PC-9 (cell line): ENCODE measurements at regions of chr18 and their contacts with region 1.

Region 1: DNA sequence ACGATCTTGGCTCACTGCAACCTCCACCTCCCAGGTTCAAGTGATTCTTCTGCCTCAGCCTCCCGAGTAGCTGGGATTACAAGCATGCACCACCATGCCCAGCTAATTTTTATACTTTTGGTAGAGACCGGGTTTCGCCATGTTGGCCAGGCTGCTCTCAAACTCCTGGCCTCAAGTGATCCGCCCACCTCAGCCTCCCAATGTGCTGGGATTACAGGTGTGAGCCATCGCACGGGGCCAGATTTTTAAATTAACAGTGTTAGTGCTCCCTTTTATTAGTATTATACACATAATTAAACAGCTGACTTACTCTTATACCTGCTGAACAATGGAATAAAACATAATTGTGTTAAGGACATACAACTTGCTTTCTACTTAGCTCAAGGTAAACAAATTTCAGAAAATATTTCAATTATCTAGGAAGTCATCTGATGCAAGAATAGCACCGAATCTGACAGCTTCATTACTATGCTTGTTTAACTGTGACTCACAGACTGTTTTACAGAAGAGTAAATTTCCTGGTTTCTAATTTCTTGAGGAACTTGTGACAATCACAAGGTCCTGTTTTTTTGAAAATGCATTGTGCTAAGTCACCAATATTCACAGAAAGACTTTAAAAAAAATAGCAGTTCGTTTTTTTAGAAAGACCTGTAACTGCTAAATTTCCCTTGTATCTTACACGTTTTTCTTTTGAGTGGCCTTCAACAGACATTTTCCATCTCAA is 51.2 kb downstream of the SPIRE1 start:
- DNase-seq: peak; percentile 11 to 95
- H3K4me3 ChIP-seq: peak overlapping the region; percentile 32; the same call in 1 of the 2 replicates
- H3K27ac ChIP-seq: peak overlapping the region; percentile 100
- H3K4me1 ChIP-seq: peaks cover 38% of the 10 kb centered on the region
- H3K27me3 ChIP-seq: no peaks in the 10 kb centered on the region
- CTCF ChIP-seq: no peak

Region 2: GRCh38 chr18:12500986-12501385 is 105.8 kb before region 1 on chr18:
- CTCF ChIA-PET with region 1: interaction called, 12 read pairs
- POLR2A ChIA-PET with region 1: no interaction called
- intact Hi-C with region 1: no loop called
- DNase-seq: no peak
- H3K4me3 ChIP-seq: no peak overlapping the region
- H3K27ac ChIP-seq: no peak overlapping the region
- H3K4me1 ChIP-seq: peaks cover 9% of the 10 kb centered on the region
- H3K27me3 ChIP-seq: no peaks in the 10 kb centered on the region
- CTCF ChIP-seq: no peak

Region 3: DNA sequence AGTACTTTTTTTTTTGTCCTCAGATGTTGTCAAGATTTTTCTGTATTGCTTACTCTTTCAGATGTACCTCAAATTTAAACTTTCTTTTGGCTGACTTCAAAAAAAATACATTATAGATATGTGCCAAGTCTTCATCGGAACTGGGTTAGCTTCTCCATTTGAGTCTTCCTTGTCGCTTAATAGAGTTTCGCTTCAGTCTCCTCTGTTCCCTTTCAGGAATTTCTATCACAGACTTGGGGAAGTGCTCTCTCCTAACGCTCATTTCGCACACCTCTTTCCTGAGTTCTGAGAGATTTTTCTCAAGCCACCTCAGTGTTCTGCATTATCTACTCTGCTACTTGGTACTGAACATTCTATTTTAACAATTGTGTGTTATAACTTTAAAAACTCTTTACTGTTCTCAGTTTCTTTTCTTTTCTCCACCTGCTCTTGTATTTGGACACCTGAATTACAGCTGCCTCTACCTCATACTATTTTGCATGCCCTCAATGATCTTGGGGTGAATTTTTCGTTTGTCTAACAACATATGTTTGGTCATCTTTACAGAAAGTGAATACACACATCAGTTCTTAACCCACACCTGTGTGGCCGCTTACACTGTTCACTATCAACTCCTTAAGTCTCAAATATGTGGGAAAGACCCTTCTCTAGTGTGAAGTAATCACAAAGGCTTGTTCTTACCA is 260.8 kb after region 1 on chr18:
- CTCF ChIA-PET with region 1: no interaction called
- POLR2A ChIA-PET with region 1: no interaction called
- intact Hi-C with region 1: no loop called
- DNase-seq: no peak
- H3K4me3 ChIP-seq: no peak overlapping the region
- H3K27ac ChIP-seq: no peak overlapping the region
- H3K4me1 ChIP-seq: peaks cover 21% of the 10 kb centered on the region
- H3K27me3 ChIP-seq: no peaks in the 10 kb centered on the region
- CTCF ChIP-seq: no peak